Heart left ventricle (tissue), 16 donors: ENCODE measurements at regions of chr16 and their contacts with region 1.

Region 1: GRCh38 chr16:84819644-84820324 is at the start of gene CRISPLD2:
- DNase-seq: peak; percentile 91 to 97 (median 96)
- ATAC-seq: peak; percentile 82 to 97 (median 93)
- H3K4me3 ChIP-seq: peak within 1 kb of the TSS; percentile 9 to 84 (median 62)
- H3K27ac ChIP-seq: peak within 1 kb of the TSS in 9 of 12 donors; percentile 20 to 97 (median 75)
- H3K4me1 ChIP-seq: peaks cover 0 to 42% (median 8%) of the 10 kb centered on the region in 12 donors
- H3K27me3 ChIP-seq: peaks cover 0 to 9% (median 0%) of the 10 kb centered on the region in 9 donors
- CTCF ChIP-seq: no peak
- POLR2A ChIP-seq: peak; percentile 71 to 95
- total RNA-seq, gene CRISPLD2: 8.0 to 153 (median 12.9) TPM

Region 2: GRCh38 chr16:84511180-84511824 is 308.5 kb before region 1 on chr16:
- intact Hi-C with region 1: no loop called
- DNase-seq: peak; percentile 74 to 90 (median 82)
- ATAC-seq: peak; percentile 62 to 87 (median 82)
- H3K4me3 ChIP-seq: no peak overlapping the region
- H3K27ac ChIP-seq: no peak overlapping the region
- H3K4me1 ChIP-seq: peaks cover 0 to 42% (median 5%) of the 10 kb centered on the region in 12 donors
- H3K27me3 ChIP-seq: no peaks in the 10 kb centered on the region
- CTCF ChIP-seq: peak; percentile 94 to 99 (median 98)
- POLR2A ChIP-seq: peak in 1 of 2 donors; percentile 15

Region 3: DNA sequence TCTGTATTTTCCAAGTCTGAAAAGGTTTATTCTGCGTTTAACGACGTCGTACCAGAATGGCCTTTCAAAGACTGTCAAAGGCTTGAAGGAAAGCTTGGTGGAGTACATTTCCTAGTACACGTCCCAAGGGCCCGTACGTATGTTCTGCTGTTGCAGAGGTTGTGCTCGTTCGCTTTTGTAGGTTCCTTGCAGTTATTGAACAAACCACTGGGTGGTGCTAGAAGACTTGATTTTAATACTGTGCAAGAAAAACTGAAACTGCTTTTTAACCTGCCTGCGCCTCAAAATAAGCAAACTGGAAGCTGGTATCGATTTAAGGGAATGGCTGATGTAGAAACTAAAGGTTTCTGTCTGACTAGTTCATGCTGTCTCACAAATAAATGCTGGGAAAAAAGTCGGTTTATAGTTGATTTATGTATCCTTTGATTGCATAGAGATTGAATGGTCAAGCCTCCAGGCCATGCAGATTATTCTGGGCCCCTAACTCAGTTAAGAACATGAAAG is 65.4 kb before region 1 on chr16:
- intact Hi-C with region 1: loop called in 1 of 10 experiments (anchors 10 kb)
- DNase-seq: peak in 3 of 5 donors; percentile 46 to 62 (median 60)
- ATAC-seq: peak in 3 of 4 donors; percentile 75 to 82 (median 78)
- H3K4me3 ChIP-seq: no peak overlapping the region
- H3K27ac ChIP-seq: peak overlapping the region in 1 of 12 donors; percentile 54
- H3K4me1 ChIP-seq: peaks cover 0 to 66% (median 16%) of the 10 kb centered on the region in 12 donors
- H3K27me3 ChIP-seq: no peaks in the 10 kb centered on the region
- CTCF ChIP-seq: peak; percentile 75 to 90 (median 84)
- POLR2A ChIP-seq: no peak

Region 4: GRCh38 chr16:84874004-84874435 is 54.2 kb after region 1 on chr16:
- intact Hi-C with region 1: loop called in 1 of 10 experiments (anchors 5 kb)
- DNase-seq: peak in 2 of 5 donors; percentile 6 to 51
- ATAC-seq: peak in 3 of 4 donors; percentile 71 to 90 (median 79)
- H3K4me3 ChIP-seq: no peak overlapping the region
- H3K27ac ChIP-seq: peak overlapping the region in 1 of 12 donors; percentile 34
- H3K4me1 ChIP-seq: no peaks in the 10 kb centered on the region
- H3K27me3 ChIP-seq: no peaks in the 10 kb centered on the region
- CTCF ChIP-seq: no peak
- POLR2A ChIP-seq: no peak